ENCODE measurements at regions of chr6 and their contacts with region 1.

Region 1: GRCh38 chr6:145147981-145148783 is 587.1 kb downstream of the EPM2A start:
- DNase-seq: peak; percentile 27
- H3K4me3 ChIP-seq: no peak overlapping the region
- CTCF ChIP-seq: no peak

Region 2: GRCh38 chr6:145206247-145206907 is 58.2 kb after region 1 on chr6:
- in situ Hi-C with region 1: loop called (anchors 5 kb)
- DNase-seq: no peak
- H3K4me3 ChIP-seq: no peak overlapping the region
- CTCF ChIP-seq: no peak

Measured in astrocyte of the cerebellum (primary cell).